WTC11 (cell line): ENCODE measurements at regions of chr15 and their contacts with region 1.

Region 1: DNA sequence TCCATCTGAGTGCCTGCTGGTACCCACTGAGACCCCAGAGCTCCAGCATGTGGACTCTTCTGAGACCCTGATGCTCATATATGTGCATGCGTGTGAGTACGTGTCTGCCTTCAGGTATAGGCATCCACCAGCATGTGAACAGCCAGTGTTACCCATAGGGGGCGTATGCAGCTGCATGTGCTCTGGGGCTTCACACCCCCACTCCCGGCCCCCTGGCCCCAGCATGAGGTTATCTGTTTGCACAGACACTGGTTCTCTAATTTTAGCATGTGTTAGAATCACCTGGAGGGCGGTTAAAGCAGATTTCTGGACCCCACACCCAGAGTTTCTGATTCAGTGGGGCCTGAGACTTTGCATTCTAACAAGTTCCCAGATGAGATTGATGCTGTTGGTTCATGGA is 824 bp upstream of the CILP start:
- DNase-seq: peak; percentile 69
- ATAC-seq: peak; percentile 91
- H3K4me3 Mint-ChIP-seq: no peak overlapping the region
- H3K27ac Mint-ChIP-seq: no peak overlapping the region
- H3K4me1 Mint-ChIP-seq: no peaks in the 10 kb centered on the region; the same call in 1 of the 2 replicates
- H3K27me3 Mint-ChIP-seq: no peaks in the 10 kb centered on the region
- CTCF ChIP-seq: peak; percentile 83

Region 2: DNA sequence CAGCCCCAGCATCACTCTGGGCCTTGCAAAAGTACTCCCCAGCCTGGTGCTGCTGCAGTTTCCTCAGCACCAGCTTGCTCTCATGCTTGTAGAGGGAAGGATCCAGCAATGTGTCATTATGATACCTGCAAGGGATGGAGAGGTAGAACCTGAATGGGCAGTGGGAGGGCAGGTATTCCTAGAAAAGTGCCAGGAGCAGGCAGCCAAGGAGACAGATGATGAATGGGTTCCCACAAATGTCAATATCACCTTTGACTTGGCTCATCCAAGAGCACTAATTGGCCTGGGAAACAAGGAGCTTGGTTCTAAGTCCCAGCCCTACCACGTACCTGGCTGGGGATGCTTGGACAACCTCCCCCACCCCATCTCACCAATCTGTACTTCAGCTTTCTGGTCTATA is 10.2 kb before region 1 on chr15:
- CTCF ChIA-PET with region 1: interaction called, 33 read pairs
- POLR2A ChIA-PET with region 1: interaction called, 3 read pairs
- DNase-seq: no peak
- ATAC-seq: no peak
- H3K4me3 Mint-ChIP-seq: no peak overlapping the region
- H3K27ac Mint-ChIP-seq: no peak overlapping the region
- H3K4me1 Mint-ChIP-seq: no peaks in the 10 kb centered on the region
- H3K27me3 Mint-ChIP-seq: no peaks in the 10 kb centered on the region
- CTCF ChIP-seq: no peak

Region 3: DNA sequence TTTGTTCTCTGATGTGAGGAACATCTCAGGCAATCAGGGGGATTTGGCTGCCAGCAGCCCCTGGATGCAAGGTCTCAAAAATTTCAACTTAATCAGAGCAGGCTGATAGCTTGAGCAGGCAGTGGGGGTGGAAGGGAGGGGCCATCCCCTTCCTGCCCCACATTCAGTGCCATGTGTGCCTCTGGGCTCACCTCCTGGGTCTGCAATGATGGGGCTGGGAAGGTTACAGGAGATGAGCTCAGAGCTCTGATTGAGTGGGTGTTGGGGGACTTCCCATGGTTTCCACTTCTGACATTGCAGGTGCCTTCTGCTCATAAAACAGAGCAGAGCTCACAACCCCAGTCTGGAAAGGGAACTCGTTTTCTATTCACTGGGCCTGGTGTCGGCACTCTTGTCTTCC is 37.5 kb after region 1 on chr15:
- CTCF ChIA-PET with region 1: interaction called, 10 read pairs
- POLR2A ChIA-PET with region 1: no interaction called
- DNase-seq: no peak
- ATAC-seq: no peak
- H3K4me3 Mint-ChIP-seq: no peak overlapping the region
- H3K27ac Mint-ChIP-seq: no peak overlapping the region
- H3K4me1 Mint-ChIP-seq: peaks cover 10% of the 10 kb centered on the region
- H3K27me3 Mint-ChIP-seq: no peaks in the 10 kb centered on the region
- CTCF ChIP-seq: no peak

Region 4: GRCh38 chr15:65275728-65276126 is 63.6 kb after region 1 on chr15:
- CTCF ChIA-PET with region 1: interaction called, 20 read pairs
- POLR2A ChIA-PET with region 1: no interaction called
- DNase-seq: no peak
- ATAC-seq: no peak
- H3K4me3 Mint-ChIP-seq: no peak overlapping the region
- H3K27ac Mint-ChIP-seq: no peak overlapping the region; the same call in 1 of the 2 replicates
- H3K4me1 Mint-ChIP-seq: peaks cover 7% of the 10 kb centered on the region; the same call in 1 of the 2 replicates
- H3K27me3 Mint-ChIP-seq: no peaks in the 10 kb centered on the region
- CTCF ChIP-seq: no peak

Region 5: GRCh38 chr15:65318870-65319356 is 106.8 kb after region 1 on chr15:
- CTCF ChIA-PET with region 1: no interaction called
- POLR2A ChIA-PET with region 1: no interaction called
- DNase-seq: peak; percentile 89
- ATAC-seq: peak; percentile 96
- H3K4me3 Mint-ChIP-seq: no peak overlapping the region
- H3K27ac Mint-ChIP-seq: no peak overlapping the region; the same call in 1 of the 2 replicates
- H3K4me1 Mint-ChIP-seq: no peaks in the 10 kb centered on the region
- H3K27me3 Mint-ChIP-seq: no peaks in the 10 kb centered on the region; the same call in 1 of the 2 replicates
- CTCF ChIP-seq: peak; percentile 93